ENCODE measurements at regions of chr4 and their contacts with region 1.

Region 1: GRCh38 chr4:75752637-75753036 is 28.3 kb downstream of the USO1 start:
- DNase-seq: no peak

Region 2: DNA sequence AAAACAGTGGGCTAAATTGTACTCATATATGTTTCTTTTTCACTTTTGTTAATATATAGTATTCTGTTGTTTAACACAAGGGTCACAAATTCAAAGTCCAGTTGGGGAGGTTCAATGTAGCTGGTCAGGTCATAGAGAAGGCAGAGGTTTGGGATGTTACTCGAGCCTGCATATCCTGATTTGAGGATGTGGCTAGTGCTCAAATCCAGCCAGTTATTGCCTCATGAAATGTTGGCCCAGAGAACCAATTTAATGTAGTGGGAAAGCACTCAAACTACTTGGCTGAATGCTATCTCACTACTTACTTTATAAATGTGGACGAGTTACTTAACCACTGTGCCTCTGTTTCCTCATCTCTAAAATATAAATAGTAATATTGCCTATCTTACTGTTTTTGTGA is 15.8 kb before region 1 on chr4:
- CTCF ChIA-PET with region 1: interaction called, 10 read pairs
- POLR2A ChIA-PET with region 1: no interaction called
- DNase-seq: no peak

Region 3: DNA sequence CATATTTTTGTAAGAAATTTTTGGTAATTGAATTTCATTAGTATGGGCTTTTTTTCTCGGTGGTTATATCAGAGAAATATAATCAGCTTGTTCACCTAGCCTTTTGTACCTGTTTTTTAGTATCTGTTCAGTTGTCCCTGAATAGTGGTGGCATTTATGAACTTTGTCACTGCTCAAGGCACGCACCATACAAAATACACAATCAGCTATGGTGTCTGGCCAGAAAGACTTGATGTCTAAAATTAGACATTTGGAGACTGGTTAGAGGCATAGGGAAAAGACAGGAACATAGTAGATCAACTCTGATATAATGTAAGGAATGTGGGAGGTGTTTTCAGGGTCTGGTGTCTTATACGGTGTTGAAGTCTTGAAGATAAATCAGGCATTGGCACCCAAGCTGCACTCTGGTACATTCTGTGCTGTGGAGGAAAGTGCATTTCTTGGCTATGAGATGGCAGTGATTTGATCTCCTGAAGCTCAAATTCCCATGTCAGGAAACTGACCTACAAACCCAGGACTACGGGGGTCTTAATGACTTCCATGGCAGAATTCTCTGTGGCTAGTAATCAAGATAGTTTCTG is 325.5 kb after region 1 on chr4:
- CTCF ChIA-PET with region 1: no interaction called
- POLR2A ChIA-PET with region 1: no interaction called
- DNase-seq: no peak